Posterior cingulate gyrus (tissue), 11 donors: ENCODE measurements at regions of chr12 and their contacts with region 1.

Region 1: GRCh38 chr12:62435303-62436163 is 31.1 kb upstream of the MON2 start:
- DNase-seq: peak; percentile 37 to 93 (median 60)

Region 2: DNA sequence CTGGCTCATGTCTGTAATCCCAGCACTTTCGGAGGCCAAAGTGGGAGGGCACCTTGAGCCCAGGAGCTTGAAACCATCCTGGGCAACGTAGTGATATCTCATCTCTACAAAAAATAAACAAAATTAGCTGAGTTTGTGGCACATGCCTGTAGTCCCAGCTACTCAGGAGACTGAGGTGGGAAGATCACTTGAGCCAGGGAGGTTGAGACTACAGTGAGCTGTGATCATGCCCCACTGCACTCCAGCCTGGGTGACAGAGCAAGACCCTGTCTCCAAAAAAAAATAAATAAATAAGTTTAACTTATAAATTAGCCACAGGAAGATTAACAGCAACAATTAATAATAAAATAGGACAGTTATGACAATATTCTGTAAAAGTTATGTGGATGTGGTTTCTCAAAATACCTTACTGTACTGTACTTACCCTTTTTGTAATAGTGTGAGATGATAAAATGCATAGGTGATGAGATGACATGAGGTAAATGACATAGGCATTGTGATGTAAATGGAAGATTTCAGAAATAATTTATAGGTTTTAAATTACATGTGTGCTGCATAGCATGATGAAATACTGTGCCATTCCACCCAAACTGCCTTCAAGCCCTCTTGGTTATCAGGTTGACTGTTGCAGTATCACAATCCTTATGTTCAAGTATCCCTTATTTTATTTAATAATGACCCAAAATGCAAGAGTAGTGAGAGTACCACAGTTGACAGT is 153.3 kb before region 1 on chr12:
- intact Hi-C with region 1: no loop called
- DNase-seq: no peak

Region 3: GRCh38 chr12:62522984-62523383 is 87.5 kb after region 1 on chr12:
- intact Hi-C with region 1: loop called (anchors 10 kb)
- DNase-seq: no peak

Region 4: DNA sequence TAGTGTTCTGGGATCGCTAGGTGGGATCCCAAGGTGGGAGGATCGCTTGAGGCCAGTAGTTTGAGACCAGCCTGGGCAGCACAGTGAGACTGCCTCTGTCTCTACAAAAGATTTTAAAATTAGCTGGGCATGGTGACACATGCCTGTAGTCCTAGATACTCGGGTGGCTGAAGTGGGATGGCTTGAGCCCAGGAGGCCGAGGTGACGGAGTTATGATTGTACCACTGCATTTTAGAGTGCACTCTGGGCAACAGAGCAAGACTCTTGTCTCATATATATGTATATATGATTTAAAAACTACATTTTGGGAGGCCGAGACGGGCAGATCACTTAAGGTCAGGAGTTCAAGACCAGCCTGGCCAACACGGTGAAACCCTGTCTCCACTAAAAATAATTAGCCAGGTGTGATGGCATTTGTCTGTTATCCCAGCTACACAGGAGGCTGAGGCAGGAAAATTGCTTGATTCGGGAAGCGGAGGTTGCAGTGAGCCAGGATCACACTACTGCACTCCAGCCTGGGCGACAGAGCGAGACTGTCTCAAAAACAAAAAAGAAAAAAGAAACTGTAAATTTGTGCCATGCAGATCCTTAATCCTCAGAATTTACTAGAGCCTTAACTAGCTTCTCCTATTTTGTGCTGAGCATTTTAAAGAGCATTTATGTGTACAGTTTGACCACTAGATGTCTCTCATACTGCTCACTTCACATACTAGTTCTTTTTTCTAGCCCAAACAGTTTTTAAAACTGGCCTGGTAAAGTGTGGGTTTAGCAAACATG is 145.9 kb after region 1 on chr12:
- intact Hi-C with region 1: loop called (anchors 5 kb)
- DNase-seq: peak in 1 of 10 donors; percentile 48

Region 5: DNA sequence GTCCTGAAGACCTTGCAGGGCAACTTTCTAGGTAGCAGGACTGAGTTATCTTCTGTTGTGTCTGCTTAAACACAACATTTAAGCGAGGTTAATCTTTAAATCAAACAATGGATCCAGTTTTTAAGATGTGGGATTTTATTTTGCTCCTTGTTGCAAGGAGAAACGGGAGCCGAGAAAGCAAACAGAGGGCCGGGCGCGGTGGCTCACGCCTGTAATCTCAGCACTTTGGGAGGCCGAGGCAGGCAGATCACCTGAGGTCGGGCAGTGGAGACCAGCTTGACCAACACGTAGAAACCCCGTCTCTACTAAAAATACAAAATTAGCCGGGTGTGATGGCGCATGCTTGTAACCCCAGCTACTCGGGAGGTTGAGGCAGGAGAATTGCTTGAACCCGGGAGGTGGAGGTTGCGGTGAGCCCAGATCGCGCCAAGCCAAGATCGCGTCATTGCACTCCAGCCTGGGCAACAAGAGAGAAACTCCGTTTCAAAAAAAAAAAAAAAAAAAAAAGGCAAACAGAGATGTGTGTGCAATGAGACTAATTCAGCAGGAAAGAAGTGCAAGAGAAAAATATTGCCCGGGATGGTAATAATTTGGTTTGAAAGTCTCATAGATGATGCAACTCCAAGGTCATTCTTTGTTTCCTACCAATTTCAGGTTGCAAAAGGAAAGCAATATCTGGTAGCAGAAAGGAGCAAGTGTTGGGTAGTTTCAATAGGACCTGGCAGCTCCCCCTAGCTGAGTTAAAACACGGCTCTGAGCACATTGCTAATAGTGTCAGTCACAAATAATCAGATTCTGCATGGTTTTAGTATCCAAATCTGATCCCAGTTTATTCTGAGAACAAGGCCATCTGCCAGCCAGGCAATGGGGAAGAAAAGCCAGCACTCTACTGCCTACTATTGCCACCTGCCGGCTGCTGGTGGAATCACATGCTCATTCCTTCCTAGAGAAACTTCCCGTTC is 358.0 kb after region 1 on chr12:
- intact Hi-C with region 1: loop called (anchors 5 kb)
- DNase-seq: peak; percentile 73 to 96 (median 90)